ENCODE measurements at regions of chr1 and their contacts with region 1.

Region 1: DNA sequence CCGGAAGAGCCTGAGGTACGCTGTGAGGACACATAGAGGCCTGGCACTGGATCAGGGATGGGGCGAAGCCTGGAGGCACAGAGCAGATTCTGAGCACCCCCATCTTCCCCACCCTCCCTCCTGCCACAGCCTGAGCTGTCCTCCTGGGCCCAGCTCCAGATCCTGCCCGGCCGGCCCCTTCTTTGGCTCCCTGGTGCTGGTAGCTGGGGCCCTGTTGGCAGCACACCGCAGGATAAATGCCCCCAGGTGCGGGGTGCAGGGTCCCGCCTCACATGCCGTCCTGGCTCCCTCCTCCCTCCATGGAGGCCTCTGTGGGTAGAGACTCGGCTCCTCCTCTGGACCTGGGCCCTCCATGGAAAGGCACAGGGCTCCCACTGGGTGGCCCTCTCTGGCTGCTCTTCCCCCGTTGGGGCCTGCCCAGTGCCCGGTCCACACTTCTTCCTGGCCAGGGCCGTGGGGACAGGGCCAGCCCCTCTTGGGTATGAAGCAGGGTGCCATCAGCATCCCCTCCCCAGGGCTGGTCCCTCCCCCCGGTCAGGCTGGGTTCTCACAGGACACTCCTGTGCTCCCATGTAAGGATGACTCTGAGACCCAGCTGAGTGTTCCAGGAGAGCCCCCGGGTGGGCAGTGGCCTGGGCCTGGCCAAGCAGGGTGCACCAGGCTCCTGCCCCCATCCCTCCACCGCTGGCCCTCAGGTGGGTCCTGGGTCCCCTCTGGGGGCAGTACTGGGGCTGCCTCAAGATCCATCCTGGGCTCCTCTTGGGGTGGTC is 1.1 kb upstream of the OBSCN start:
- DNase-seq: peak; percentile 80

Region 2: GRCh38 chr1:228393248-228393699 is 186.5 kb after region 1 on chr1:
- intact Hi-C with region 1: no loop called
- DNase-seq: peak; percentile 73

Region 3: DNA sequence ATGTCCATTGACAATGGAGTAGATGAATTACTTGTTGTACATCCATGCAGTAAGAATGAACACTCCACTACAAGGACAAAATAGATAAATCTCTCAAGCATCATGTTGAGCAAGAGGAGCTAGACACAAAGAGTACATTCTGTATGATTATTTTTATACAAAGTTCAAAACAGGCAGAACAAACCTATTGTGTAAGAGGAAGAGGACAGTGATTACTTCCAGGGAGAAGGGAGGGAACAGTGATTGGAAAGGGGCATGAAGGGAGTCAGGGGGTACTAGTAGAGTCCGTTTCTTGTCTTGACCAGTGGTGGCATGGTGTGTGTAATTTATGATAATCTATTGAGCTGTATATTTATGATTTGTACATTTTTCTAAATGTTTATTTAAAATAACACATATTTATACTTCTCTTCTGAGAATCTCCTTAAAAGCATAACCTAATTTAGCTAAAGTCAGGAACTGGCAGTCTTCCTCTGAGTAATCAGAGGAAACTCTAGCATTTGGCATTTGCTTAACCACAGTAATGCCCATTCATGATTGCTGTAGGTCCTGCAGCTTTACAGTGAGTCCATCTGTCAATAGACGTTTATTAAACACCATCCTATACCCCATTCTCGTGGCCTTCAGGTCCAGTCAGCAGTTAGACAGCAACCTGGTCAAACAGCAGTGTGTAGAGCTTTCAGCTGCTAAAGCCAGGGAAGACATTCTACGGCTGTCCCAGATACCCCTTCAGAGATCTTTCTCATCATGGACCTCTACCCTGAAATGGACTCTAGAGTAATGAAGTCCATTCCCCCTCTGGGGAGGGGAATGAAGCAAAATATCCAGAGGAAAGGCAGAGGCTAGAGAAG is 1746.1 kb after region 1 on chr1:
- intact Hi-C with region 1: loop called in 1 of 2 experiments (anchors 10 kb)
- DNase-seq: no peak